B cell (primary cell): ENCODE measurements at regions of chr2 and their contacts with region 1.

Region 1: GRCh38 chr2:74529357-74530238 is at the starts of genes AUP1 and HTRA2:
- DNase-seq: peak; percentile 95
- ATAC-seq: peak; percentile 87
- H3K4me3 ChIP-seq: peak within 1 kb of the TSS; percentile 62 to 98 (median 70)
- H3K4me3 Mint-ChIP-seq: peak within 1 kb of the TSS; percentile 97
- H3K27ac ChIP-seq: peak within 1 kb of the TSS; percentile 84 to 90
- H3K27ac Mint-ChIP-seq: peak within 1 kb of the TSS; percentile 96
- H3K4me1 ChIP-seq: peaks cover 39 to 49% of the 10 kb centered on the region in 2 donors
- H3K4me1 Mint-ChIP-seq: peaks cover 43% of the 10 kb centered on the region
- H3K27me3 ChIP-seq: no peaks in the 10 kb centered on the region
- H3K27me3 Mint-ChIP-seq: no peaks in the 10 kb centered on the region
- CTCF ChIP-seq: no peak
- total RNA-seq, gene AUP1: 190 and 201 TPM in 2 replicates
- total RNA-seq, gene HTRA2: 52.2 and 52.8 TPM in 2 replicates

Region 2: GRCh38 chr2:73233154-73233931 is 1296.3 kb before region 1 on chr2 and contains the start of gene PRADC1:
- CTCF ChIA-PET with region 1: no interaction called
- POLR2A ChIA-PET with region 1: no interaction called
- intact Hi-C with region 1: loop called (anchors 5 kb)
- DNase-seq: peak; percentile 97
- ATAC-seq: peak; percentile 85
- H3K4me3 ChIP-seq: peak within 1 kb of the TSS; percentile 89 to 99 (median 94)
- H3K4me3 Mint-ChIP-seq: peak within 1 kb of the TSS; percentile 99
- H3K27ac ChIP-seq: peak within 1 kb of the TSS; percentile 87 to 90
- H3K27ac Mint-ChIP-seq: peak within 1 kb of the TSS; percentile 93
- H3K4me1 ChIP-seq: peaks cover 18 to 20% of the 10 kb centered on the region in 2 donors
- H3K4me1 Mint-ChIP-seq: peaks cover 38% of the 10 kb centered on the region
- H3K27me3 ChIP-seq: no peaks in the 10 kb centered on the region
- H3K27me3 Mint-ChIP-seq: no peaks in the 10 kb centered on the region
- CTCF ChIP-seq: no peak
- total RNA-seq, gene PRADC1: 2.3 and 4.2 TPM in 2 replicates

Region 3: GRCh38 chr2:74250189-74250631 is 279.4 kb before region 1 on chr2:
- CTCF ChIA-PET with region 1: interaction called, 25 read pairs
- POLR2A ChIA-PET with region 1: no interaction called
- intact Hi-C with region 1: no loop called
- DNase-seq: peak; percentile 72
- ATAC-seq: peak; percentile 51
- H3K4me3 ChIP-seq: no peak overlapping the region
- H3K4me3 Mint-ChIP-seq: no peak overlapping the region
- H3K27ac ChIP-seq: no peak overlapping the region
- H3K27ac Mint-ChIP-seq: no peak overlapping the region
- H3K4me1 ChIP-seq: no peaks in the 10 kb centered on the region
- H3K4me1 Mint-ChIP-seq: peaks cover 6% of the 10 kb centered on the region
- H3K27me3 ChIP-seq: no peaks in the 10 kb centered on the region
- H3K27me3 Mint-ChIP-seq: no peaks in the 10 kb centered on the region
- CTCF ChIP-seq: peak; percentile 90

Region 4: DNA sequence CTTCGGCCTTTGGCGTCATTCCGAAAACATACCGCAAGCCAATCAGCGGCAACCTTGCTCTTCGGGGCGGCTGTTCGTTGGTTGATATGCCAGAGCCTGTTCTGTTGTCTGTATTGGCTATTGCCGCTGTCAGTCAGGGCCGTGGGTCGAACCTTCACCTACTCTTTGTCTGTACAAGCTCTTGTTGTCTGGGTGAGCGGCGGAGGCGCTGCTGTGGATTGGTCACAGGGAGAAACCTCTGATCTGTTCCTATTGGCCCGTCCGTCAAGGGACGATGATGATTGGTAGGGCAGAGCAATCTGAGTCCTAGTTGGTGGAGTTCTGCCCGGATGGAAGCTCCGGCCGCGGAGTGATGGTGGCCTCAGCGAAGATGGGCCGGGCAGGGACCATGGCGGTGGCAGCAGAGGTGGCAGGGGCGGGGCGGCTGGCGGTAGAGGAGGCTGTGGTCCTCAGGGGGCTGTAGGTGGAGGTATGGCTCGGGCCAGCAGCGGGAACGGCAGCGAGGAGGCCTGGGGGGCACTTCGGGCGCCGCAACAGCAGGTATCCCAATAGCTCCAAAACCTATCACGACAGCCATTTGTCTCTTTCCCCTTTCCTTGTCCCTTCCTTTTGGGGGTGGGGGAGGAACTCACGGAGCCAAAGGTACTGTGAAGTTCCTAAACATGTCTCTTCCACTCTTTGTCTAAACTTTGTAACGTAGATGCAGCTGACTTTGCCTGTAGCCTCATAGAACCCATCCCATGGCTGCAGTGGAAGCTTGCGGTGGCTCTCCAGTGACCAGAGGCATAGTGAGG is 71.3 kb before region 1 on chr2 and contains the start of gene WBP1:
- CTCF ChIA-PET with region 1: interaction called, 9 read pairs
- POLR2A ChIA-PET with region 1: interaction called, 8 read pairs
- intact Hi-C with region 1: loop called (anchors 1 kb)
- DNase-seq: peak; percentile 100
- ATAC-seq: peak; percentile 79
- H3K4me3 ChIP-seq: peak within 1 kb of the TSS; percentile 80 to 100 (median 93)
- H3K4me3 Mint-ChIP-seq: peak within 1 kb of the TSS; percentile 94
- H3K27ac ChIP-seq: peak within 1 kb of the TSS; percentile 97 to 100
- H3K27ac Mint-ChIP-seq: peak within 1 kb of the TSS; percentile 99
- H3K4me1 ChIP-seq: peaks cover 33 to 40% of the 10 kb centered on the region in 2 donors
- H3K4me1 Mint-ChIP-seq: peaks cover 56% of the 10 kb centered on the region
- H3K27me3 ChIP-seq: no peaks in the 10 kb centered on the region
- H3K27me3 Mint-ChIP-seq: no peaks in the 10 kb centered on the region
- CTCF ChIP-seq: no peak
- total RNA-seq, gene WBP1: 91.5 and 98.4 TPM in 2 replicates

Region 5: GRCh38 chr2:74482801-74483674 is 46.6 kb before region 1 on chr2 and contains the starts of genes CCDC142 and TTC31:
- CTCF ChIA-PET with region 1: interaction called, 50 read pairs
- POLR2A ChIA-PET with region 1: interaction called, 19 read pairs
- intact Hi-C with region 1: loop called (anchors 1 kb)
- DNase-seq: peak; percentile 97
- ATAC-seq: peak; percentile 90
- H3K4me3 ChIP-seq: peak within 1 kb of the TSS; percentile 74 to 96 (median 88)
- H3K4me3 Mint-ChIP-seq: peak within 1 kb of the TSS; percentile 100
- H3K27ac ChIP-seq: peak within 1 kb of the TSS; percentile 71 to 84
- H3K27ac Mint-ChIP-seq: peak within 1 kb of the TSS; percentile 99
- H3K4me1 ChIP-seq: peaks cover 21 to 29% of the 10 kb centered on the region in 2 donors
- H3K4me1 Mint-ChIP-seq: peaks cover 34% of the 10 kb centered on the region
- H3K27me3 ChIP-seq: no peaks in the 10 kb centered on the region
- H3K27me3 Mint-ChIP-seq: no peaks in the 10 kb centered on the region
- CTCF ChIP-seq: peak; percentile 90
- total RNA-seq, gene CCDC142: 61.6 and 69.3 TPM in 2 replicates
- total RNA-seq, gene TTC31: 69.4 and 72.3 TPM in 2 replicates

Region 6: DNA sequence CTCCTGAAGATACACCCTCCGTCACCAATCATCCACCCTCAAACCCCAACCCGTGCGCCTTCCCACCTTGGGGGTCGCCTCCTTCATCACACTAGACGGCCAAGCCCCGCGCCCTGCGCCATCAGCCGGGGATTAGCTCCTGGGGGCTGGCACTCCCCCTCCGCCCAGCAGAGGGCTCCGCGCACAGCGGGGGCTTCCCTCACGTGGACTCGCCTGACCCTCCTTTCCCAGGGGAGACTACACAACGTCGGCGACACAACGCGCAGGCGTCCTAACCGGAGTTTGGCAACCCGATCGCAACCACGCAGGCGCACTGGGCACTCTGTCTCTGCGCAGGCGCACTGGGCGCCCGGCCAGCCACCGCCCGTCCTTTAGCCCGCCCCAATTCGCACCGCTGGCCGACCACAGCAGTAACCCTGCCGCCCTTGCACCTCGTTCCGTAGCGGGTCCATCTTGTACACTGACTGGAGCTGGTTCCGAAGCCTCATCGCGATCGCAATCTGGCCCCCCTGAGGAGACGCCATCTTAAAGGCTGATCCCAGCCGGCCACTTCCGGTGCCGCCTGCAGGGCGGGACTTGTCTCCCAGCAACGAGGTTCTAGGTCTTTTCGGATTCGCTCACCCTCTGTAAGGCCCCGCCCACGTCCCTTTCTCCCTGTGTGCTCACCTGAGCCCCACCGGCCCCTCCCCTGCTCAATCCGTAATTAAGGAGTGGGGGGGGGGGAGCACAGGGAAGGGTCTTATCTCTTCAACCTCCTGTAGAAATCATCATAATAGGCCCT is 22.3 kb before region 1 on chr2 and contains the start of gene PCGF1:
- CTCF ChIA-PET with region 1: interaction called, 43 read pairs
- POLR2A ChIA-PET with region 1: interaction called, 13 read pairs
- intact Hi-C with region 1: loop called (anchors 1 kb)
- DNase-seq: peak; percentile 100
- ATAC-seq: peak; percentile 85
- H3K4me3 ChIP-seq: peak within 1 kb of the TSS; percentile 78 to 97 (median 83)
- H3K4me3 Mint-ChIP-seq: peak within 1 kb of the TSS; percentile 96
- H3K27ac ChIP-seq: peak within 1 kb of the TSS; percentile 91 to 96
- H3K27ac Mint-ChIP-seq: peak within 1 kb of the TSS; percentile 99
- H3K4me1 ChIP-seq: peaks cover 31 to 38% of the 10 kb centered on the region in 2 donors
- H3K4me1 Mint-ChIP-seq: peaks cover 56% of the 10 kb centered on the region
- H3K27me3 ChIP-seq: peaks cover 0 to 56% (median 14%) of the 10 kb centered on the region in 4 experiments
- H3K27me3 Mint-ChIP-seq: peaks cover 41% of the 10 kb centered on the region
- CTCF ChIP-seq: peak; percentile 64
- total RNA-seq, gene PCGF1: 34.3 and 40.1 TPM in 2 replicates

Region 7: DNA sequence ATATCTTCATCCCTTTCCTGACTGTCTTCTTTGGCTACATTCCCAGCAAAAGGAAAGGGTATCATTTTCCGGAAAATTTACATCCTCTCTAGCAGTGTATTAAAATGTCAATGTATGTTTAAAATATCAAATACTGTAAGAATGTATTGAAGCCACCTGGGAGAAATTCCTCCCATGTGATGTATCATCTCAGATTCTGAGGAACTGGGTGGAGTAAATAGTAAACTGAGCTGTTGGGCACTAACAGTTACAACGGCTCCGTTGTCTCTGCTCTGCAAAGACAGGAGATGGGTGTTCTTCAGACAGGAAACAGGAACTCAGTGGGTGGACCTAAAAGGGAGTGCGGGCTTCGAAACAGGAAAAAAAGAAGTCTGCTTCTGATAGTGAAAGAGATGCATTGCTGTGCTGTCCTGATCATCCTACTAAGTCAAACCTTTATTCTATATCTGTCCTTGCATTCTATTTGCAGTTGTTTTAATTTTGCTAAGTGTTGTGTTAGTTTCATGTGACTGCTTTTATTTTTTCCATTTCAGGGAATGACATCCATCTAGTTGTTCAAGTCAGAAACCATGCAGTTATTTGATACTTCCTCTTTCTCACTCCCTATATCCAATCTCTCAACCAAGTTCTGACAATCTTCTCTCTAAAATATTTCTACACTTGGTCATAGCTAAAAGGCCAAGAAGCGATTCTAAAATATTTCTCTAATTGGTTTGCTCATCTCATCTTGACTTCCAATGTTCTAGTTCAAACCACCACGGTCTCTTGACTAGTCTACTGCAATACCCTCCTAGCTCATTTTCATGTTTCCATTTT is 44.4 kb after region 1 on chr2:
- CTCF ChIA-PET with region 1: no interaction called
- POLR2A ChIA-PET with region 1: interaction called, 3 read pairs
- intact Hi-C with region 1: loop called (anchors 1 kb)
- DNase-seq: peak; percentile 69
- ATAC-seq: peak; percentile 69
- H3K4me3 ChIP-seq: peak overlapping the region in 4 of 5 experiments; percentile 21 to 34 (median 32)
- H3K4me3 Mint-ChIP-seq: peak overlapping the region; percentile 84
- H3K27ac ChIP-seq: peak overlapping the region; percentile 9 to 74
- H3K27ac Mint-ChIP-seq: peak overlapping the region; percentile 92
- H3K4me1 ChIP-seq: peaks cover 58 to 68% of the 10 kb centered on the region in 2 donors
- H3K4me1 Mint-ChIP-seq: peaks cover 46% of the 10 kb centered on the region
- H3K27me3 ChIP-seq: no peaks in the 10 kb centered on the region
- H3K27me3 Mint-ChIP-seq: no peaks in the 10 kb centered on the region
- CTCF ChIP-seq: no peak

Region 8: GRCh38 chr2:74648009-74648443 is 118.4 kb after region 1 on chr2 and contains the start of gene M1AP:
- CTCF ChIA-PET with region 1: no interaction called
- POLR2A ChIA-PET with region 1: no interaction called
- intact Hi-C with region 1: no loop called
- DNase-seq: peak; percentile 47
- ATAC-seq: peak; percentile 62
- H3K4me3 ChIP-seq: peak within 1 kb of the TSS in 3 of 5 experiments; percentile 18 to 37 (median 28)
- H3K4me3 Mint-ChIP-seq: peak within 1 kb of the TSS; percentile 70
- H3K27ac ChIP-seq: no peak within 1 kb of the TSS
- H3K27ac Mint-ChIP-seq: no peak within 1 kb of the TSS
- H3K4me1 ChIP-seq: peaks cover 0 to 4% of the 10 kb centered on the region in 2 donors
- H3K4me1 Mint-ChIP-seq: peaks cover 5% of the 10 kb centered on the region
- H3K27me3 ChIP-seq: peaks cover 0 to 20% (median 15%) of the 10 kb centered on the region in 4 experiments
- H3K27me3 Mint-ChIP-seq: peaks cover 38% of the 10 kb centered on the region
- CTCF ChIP-seq: peak; percentile 23
- total RNA-seq, gene M1AP: not detected in 2 replicates